ENCODE measurements at regions of chr19 and their contacts with region 1.

Region 1: GRCh38 chr19:43743022-43743421 is 11.7 kb downstream of the SMG9 start:
- DNase-seq: no peak
- H3K4me3 ChIP-seq: no peak overlapping the region
- H3K27me3 ChIP-seq: no peaks in the 10 kb centered on the region
- CTCF ChIP-seq: no peak

Region 2: GRCh38 chr19:43731846-43732245 is 11.2 kb before region 1 on chr19:
- CTCF ChIA-PET with region 1: interaction called, 18 read pairs
- POLR2A ChIA-PET with region 1: no interaction called
- DNase-seq: no peak
- H3K4me3 ChIP-seq: no peak overlapping the region
- H3K27me3 ChIP-seq: no peaks in the 10 kb centered on the region
- CTCF ChIP-seq: no peak

Region 3: DNA sequence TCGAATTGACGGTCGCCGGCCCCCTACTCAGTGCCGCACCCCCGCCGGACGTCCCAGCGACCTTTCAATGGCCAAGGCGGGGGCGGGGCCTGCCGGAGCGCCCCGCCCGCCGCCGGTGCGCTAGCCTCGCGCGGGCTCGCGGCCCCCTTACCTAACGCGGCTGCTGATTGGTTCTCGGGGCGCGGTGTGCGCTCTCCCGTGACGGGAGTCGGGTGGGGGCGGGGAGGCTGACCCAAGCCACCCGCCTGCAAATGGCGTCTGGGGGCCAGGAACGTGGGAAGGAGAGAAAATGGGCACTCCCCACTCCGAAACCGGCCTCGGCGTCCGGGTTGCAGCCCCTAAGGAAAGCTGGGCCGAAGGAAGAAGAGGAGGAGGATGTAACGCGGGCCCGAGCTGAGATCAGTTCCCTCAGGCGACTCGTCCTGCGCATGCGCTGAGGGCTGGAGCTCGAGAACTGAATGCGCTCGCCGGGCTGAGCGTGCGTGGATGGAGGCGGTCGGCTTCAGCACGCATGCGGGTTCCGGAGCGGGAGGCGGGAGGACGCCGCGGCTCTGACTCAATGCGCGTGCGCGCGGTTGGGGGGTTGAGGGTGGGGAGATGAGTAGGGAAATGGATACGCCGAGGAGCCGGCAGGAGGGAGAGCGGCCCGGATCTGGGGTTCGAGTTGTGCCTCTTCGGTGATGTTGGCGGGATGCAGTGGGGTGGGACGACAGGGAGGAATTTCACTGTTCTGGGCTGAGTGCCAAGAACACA is 11.7 kb after region 1 on chr19 and contains the start of gene SMG9:
- CTCF ChIA-PET with region 1: interaction called, 16 read pairs
- POLR2A ChIA-PET with region 1: no interaction called
- DNase-seq: peak; percentile 81
- H3K4me3 ChIP-seq: peak within 1 kb of the TSS; percentile 62
- H3K27me3 ChIP-seq: no peaks in the 10 kb centered on the region
- CTCF ChIP-seq: no peak
- polyA plus RNA-seq, gene SMG9: 10.1 and 14.8 TPM in 2 replicates

Region 4: GRCh38 chr19:43765109-43765876 is 22.3 kb after region 1 on chr19:
- CTCF ChIA-PET with region 1: interaction called, 59 read pairs
- POLR2A ChIA-PET with region 1: no interaction called
- DNase-seq: peak; percentile 92
- H3K4me3 ChIP-seq: no peak overlapping the region
- H3K27me3 ChIP-seq: no peaks in the 10 kb centered on the region
- CTCF ChIP-seq: no peak

Region 5: GRCh38 chr19:43774103-43774939 is 31.3 kb after region 1 on chr19:
- CTCF ChIA-PET with region 1: interaction called, 71 read pairs
- POLR2A ChIA-PET with region 1: no interaction called
- DNase-seq: no peak
- H3K4me3 ChIP-seq: no peak overlapping the region
- H3K27me3 ChIP-seq: peaks cover 2% of the 10 kb centered on the region; the same call in 1 of the 2 replicates
- CTCF ChIP-seq: peak; percentile 85

Region 6: GRCh38 chr19:43784981-43785808 is 42.2 kb after region 1 on chr19:
- CTCF ChIA-PET with region 1: interaction called, 70 read pairs
- POLR2A ChIA-PET with region 1: no interaction called
- DNase-seq: no peak
- H3K4me3 ChIP-seq: no peak overlapping the region
- H3K27me3 ChIP-seq: no peaks in the 10 kb centered on the region
- CTCF ChIP-seq: peak; percentile 100

Region 7: GRCh38 chr19:43809762-43810696 is 67.0 kb after region 1 on chr19:
- CTCF ChIA-PET with region 1: interaction called, 12 read pairs
- POLR2A ChIA-PET with region 1: no interaction called
- DNase-seq: no peak
- H3K4me3 ChIP-seq: no peak overlapping the region
- H3K27me3 ChIP-seq: peaks cover 2% of the 10 kb centered on the region; the same call in 1 of the 2 replicates
- CTCF ChIP-seq: peak; percentile 56